WTC11 (cell line): ENCODE measurements at regions of chr1 and their contacts with region 1.

Region 1: GRCh38 chr1:38500352-38500751 is 359.2 kb downstream of the RRAGC start:
- DNase-seq: no peak
- ATAC-seq: no peak
- H3K4me3 Mint-ChIP-seq: no peak overlapping the region
- H3K27ac Mint-ChIP-seq: no peak overlapping the region
- H3K4me1 Mint-ChIP-seq: peaks cover 49% of the 10 kb centered on the region
- H3K27me3 Mint-ChIP-seq: no peaks in the 10 kb centered on the region; the same call in 1 of the 2 replicates
- CTCF ChIP-seq: 0 out of 2 replicates have a peak, but pooled peaks have one; percentile 37

Region 2: DNA sequence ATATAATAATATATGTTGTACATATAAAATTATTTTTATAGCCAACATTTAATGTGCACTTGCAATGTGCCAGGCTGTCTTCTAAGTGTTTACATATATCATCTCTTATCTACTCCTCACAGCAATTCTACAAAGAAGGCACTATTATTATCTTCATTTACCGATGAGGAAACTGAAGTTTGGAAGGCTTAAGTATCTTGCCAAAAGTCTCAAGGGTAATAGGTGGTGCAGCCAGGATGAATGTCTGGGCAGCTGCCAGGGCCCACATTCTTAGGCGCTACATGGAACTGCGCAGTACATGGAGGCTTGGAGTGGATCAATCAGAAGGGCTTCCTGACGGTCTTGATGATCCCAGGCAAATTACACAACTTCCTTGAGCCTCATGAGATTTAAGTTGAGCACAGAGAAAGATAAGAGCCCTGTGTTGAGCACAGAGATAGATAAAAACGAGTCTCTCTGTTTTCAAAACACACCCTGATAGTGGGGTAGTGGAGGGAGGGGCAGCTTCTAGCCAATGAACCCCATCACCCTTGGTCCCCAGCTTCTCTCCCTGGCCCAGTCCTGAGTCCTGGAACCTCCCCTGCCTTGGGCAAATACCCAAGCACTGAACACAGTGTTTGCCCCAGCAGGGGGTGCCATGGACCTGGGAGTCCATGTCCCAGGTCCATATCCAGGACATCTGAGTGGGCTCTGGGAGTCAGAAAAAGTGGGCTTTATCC is 463.0 kb before region 1 on chr1:
- CTCF ChIA-PET with region 1: interaction called, 28 read pairs
- POLR2A ChIA-PET with region 1: no interaction called
- DNase-seq: no peak
- ATAC-seq: no peak
- H3K4me3 Mint-ChIP-seq: no peak overlapping the region
- H3K27ac Mint-ChIP-seq: no peak overlapping the region
- H3K4me1 Mint-ChIP-seq: peaks cover 13% of the 10 kb centered on the region
- H3K27me3 Mint-ChIP-seq: peaks cover 6% of the 10 kb centered on the region
- CTCF ChIP-seq: no peak

Region 3: GRCh38 chr1:38138498-38139233 is 361.7 kb before region 1 on chr1:
- CTCF ChIA-PET with region 1: interaction called, 12 read pairs
- POLR2A ChIA-PET with region 1: no interaction called
- DNase-seq: no peak
- ATAC-seq: no peak
- H3K4me3 Mint-ChIP-seq: no peak overlapping the region
- H3K27ac Mint-ChIP-seq: no peak overlapping the region
- H3K4me1 Mint-ChIP-seq: peaks cover 71% of the 10 kb centered on the region
- H3K27me3 Mint-ChIP-seq: peaks cover 37% of the 10 kb centered on the region
- CTCF ChIP-seq: no peak

Region 4: GRCh38 chr1:38474738-38475623 is 25.4 kb before region 1 on chr1:
- CTCF ChIA-PET with region 1: interaction called, 10 read pairs
- POLR2A ChIA-PET with region 1: no interaction called
- DNase-seq: no peak
- ATAC-seq: peak; percentile 14
- H3K4me3 Mint-ChIP-seq: peak overlapping the region; percentile 78
- H3K27ac Mint-ChIP-seq: peak overlapping the region; percentile 95
- H3K4me1 Mint-ChIP-seq: peaks cover 31% of the 10 kb centered on the region
- H3K27me3 Mint-ChIP-seq: peaks cover 30% of the 10 kb centered on the region
- CTCF ChIP-seq: no peak

Region 5: GRCh38 chr1:38527373-38527966 is 27.1 kb after region 1 on chr1:
- CTCF ChIA-PET with region 1: interaction called, 12 read pairs
- POLR2A ChIA-PET with region 1: interaction called, 3 read pairs
- DNase-seq: peak; percentile 26
- ATAC-seq: peak; percentile 43; the same call in 1 of the 2 replicates
- H3K4me3 Mint-ChIP-seq: no peak overlapping the region
- H3K27ac Mint-ChIP-seq: no peak overlapping the region
- H3K4me1 Mint-ChIP-seq: peaks cover 8% of the 10 kb centered on the region; the same call in 1 of the 2 replicates
- H3K27me3 Mint-ChIP-seq: no peaks in the 10 kb centered on the region; the same call in 1 of the 2 replicates
- CTCF ChIP-seq: no peak

Region 6: GRCh38 chr1:38546636-38547035 is 46.3 kb after region 1 on chr1:
- CTCF ChIA-PET with region 1: no interaction called
- POLR2A ChIA-PET with region 1: no interaction called
- DNase-seq: no peak
- ATAC-seq: no peak
- H3K4me3 Mint-ChIP-seq: no peak overlapping the region
- H3K27ac Mint-ChIP-seq: no peak overlapping the region
- H3K4me1 Mint-ChIP-seq: peaks cover 8% of the 10 kb centered on the region
- H3K27me3 Mint-ChIP-seq: peaks cover 4% of the 10 kb centered on the region
- CTCF ChIP-seq: no peak